ENCODE measurements at regions of chr6 and their contacts with region 1.

Region 1: GRCh38 chr6:32894080-32895005 is 40.4 kb downstream of the PSMB9 start:
- DNase-seq: peak; percentile 91 to 97 (median 91)
- H3K4me3 ChIP-seq: peak overlapping the region; percentile 78 to 90
- H3K4me3 Mint-ChIP-seq: peak overlapping the region; percentile 99 to 100 (median 100)
- H3K27ac ChIP-seq: peak overlapping the region; percentile 84
- H3K27ac Mint-ChIP-seq: peak overlapping the region; percentile 93 to 99 (median 98)
- H3K4me1 ChIP-seq: peaks cover 21% of the 10 kb centered on the region
- H3K4me1 Mint-ChIP-seq: peaks cover 14 to 45% (median 26%) of the 10 kb centered on the region in 4 donors
- H3K27me3 ChIP-seq: no peaks in the 10 kb centered on the region
- H3K27me3 Mint-ChIP-seq: no peaks in the 10 kb centered on the region

Region 2: DNA sequence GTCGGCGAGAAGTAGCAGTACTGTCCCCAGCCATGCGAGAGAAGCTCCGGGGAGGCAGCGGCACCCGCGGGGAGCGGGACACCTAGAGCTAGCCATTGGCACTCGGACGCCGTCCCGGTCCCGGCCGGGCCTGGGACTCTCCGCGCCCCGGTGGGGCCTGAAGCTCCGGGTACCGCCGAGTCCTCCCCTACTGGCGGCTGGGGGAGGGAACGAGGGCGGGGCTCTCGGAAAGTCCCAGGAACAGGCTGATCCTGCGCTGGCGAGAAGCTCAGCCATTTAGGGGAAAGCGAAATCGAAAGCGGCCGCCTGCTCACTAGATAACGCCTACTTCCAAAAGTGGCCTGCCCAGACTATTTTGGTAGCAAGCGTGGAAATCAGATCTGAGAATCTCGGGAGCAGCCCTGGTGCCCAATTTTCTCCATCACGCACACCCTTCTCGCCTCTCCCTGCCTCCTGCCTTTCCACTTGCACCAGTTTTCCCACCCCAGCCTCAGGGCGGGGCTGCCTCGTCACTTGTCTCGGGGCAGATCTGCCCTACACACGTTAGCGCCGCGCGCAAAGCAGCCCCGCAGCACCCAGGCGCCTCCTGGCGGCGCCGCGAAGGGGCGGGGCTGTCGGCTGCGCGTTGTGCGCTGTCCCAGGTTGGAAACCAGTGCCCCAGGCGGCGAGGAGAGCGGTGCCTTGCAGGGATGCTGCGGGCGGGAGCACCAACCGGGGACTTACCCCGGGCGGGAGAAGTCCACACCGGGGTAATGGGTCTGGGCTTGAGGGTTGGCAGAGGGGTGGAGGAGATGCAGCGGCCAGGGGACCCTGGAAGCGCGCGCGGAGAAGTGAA is 40.6 kb before region 1 on chr6 and contains the starts of genes PSMB9 and TAP1:
- CTCF ChIA-PET with region 1: interaction called, 4 read pairs
- POLR2A ChIA-PET with region 1: interaction called, 15 read pairs
- intact Hi-C with region 1: no loop called
- DNase-seq: peak; percentile 94 to 98 (median 96)
- H3K4me3 ChIP-seq: peak within 1 kb of the TSS; percentile 93 to 98
- H3K4me3 Mint-ChIP-seq: peak within 1 kb of the TSS; percentile 98 to 100 (median 99)
- H3K27ac ChIP-seq: peak within 1 kb of the TSS; percentile 100
- H3K27ac Mint-ChIP-seq: peak within 1 kb of the TSS; percentile 99 to 100 (median 100)
- H3K4me1 ChIP-seq: peaks cover 76% of the 10 kb centered on the region
- H3K4me1 Mint-ChIP-seq: peaks cover 57 to 92% (median 66%) of the 10 kb centered on the region in 4 donors
- H3K27me3 ChIP-seq: no peaks in the 10 kb centered on the region
- H3K27me3 Mint-ChIP-seq: no peaks in the 10 kb centered on the region
- total RNA-seq, gene PSMB9: 141 to 144 TPM
- total RNA-seq, gene TAP1: 136 to 141 TPM

Region 3: DNA sequence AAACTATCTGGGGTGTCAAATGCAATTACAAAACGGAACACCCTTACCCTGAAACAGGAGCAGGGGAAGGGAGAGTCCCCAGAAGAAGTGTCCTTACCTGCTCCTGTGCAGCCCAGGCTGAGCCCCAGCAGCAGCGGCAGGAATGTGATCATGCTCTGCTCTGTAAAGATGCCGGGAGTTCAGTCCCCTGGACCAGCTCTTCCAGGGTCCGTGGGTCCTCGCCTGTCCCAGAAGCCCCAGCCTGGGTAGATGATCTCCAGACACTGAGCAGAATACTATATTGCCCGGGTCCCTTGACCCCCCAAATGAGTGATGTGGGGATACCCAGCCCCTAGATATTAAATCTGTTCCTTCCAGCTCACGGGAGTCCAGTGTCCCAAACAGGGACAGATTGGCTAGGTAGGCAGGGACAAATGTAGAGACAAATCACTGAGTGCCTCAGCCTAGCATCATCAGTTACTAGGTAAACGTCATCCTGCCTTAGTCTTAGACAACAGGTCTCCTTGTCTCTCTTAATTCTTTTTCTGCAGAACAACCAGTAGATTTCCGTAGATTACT is 46.4 kb after region 1 on chr6 and contains the start of gene HLA-DMB:
- CTCF ChIA-PET with region 1: interaction called, 5 read pairs
- POLR2A ChIA-PET with region 1: interaction called, 24 read pairs
- intact Hi-C with region 1: no loop called
- DNase-seq: peak; percentile 68 to 82 (median 70)
- H3K4me3 ChIP-seq: peak within 1 kb of the TSS; percentile 57 to 73
- H3K4me3 Mint-ChIP-seq: peak within 1 kb of the TSS; percentile 89 to 97 (median 92)
- H3K27ac ChIP-seq: peak within 1 kb of the TSS; percentile 68
- H3K27ac Mint-ChIP-seq: peak within 1 kb of the TSS; percentile 90 to 99 (median 94)
- H3K4me1 ChIP-seq: peaks cover 57% of the 10 kb centered on the region
- H3K4me1 Mint-ChIP-seq: peaks cover 46 to 60% (median 53%) of the 10 kb centered on the region in 4 donors
- H3K27me3 ChIP-seq: no peaks in the 10 kb centered on the region
- H3K27me3 Mint-ChIP-seq: no peaks in the 10 kb centered on the region
- total RNA-seq, gene HLA-DMB: 7.9 to 8.1 TPM

Region 4: GRCh38 chr6:32952817-32953739 is 58.7 kb after region 1 on chr6 and contains the start of gene HLA-DMA:
- CTCF ChIA-PET with region 1: interaction called, 13 read pairs
- POLR2A ChIA-PET with region 1: interaction called, 14 read pairs
- intact Hi-C with region 1: loop called (anchors 2 kb)
- DNase-seq: peak; percentile 76 to 90 (median 85)
- H3K4me3 ChIP-seq: peak within 1 kb of the TSS; percentile 7 to 19
- H3K4me3 Mint-ChIP-seq: peak within 1 kb of the TSS; percentile 18 to 80 (median 68)
- H3K27ac ChIP-seq: peak within 1 kb of the TSS; percentile 31
- H3K27ac Mint-ChIP-seq: peak within 1 kb of the TSS; percentile 49 to 89 (median 82)
- H3K4me1 ChIP-seq: peaks cover 27% of the 10 kb centered on the region
- H3K4me1 Mint-ChIP-seq: peaks cover 24 to 44% (median 34%) of the 10 kb centered on the region in 4 donors
- H3K27me3 ChIP-seq: no peaks in the 10 kb centered on the region
- H3K27me3 Mint-ChIP-seq: no peaks in the 10 kb centered on the region
- total RNA-seq, gene HLA-DMA: 8.5 to 10.2 TPM

Region 5: GRCh38 chr6:33061987-33062386 is 167.6 kb after region 1 on chr6:
- CTCF ChIA-PET with region 1: no interaction called
- POLR2A ChIA-PET with region 1: no interaction called
- intact Hi-C with region 1: no loop called
- DNase-seq: no peak
- H3K4me3 ChIP-seq: no peak overlapping the region
- H3K4me3 Mint-ChIP-seq: no peak overlapping the region
- H3K27ac ChIP-seq: no peak overlapping the region
- H3K27ac Mint-ChIP-seq: no peak overlapping the region
- H3K4me1 ChIP-seq: no peaks in the 10 kb centered on the region
- H3K4me1 Mint-ChIP-seq: peaks cover 0 to 5% (median 1%) of the 10 kb centered on the region in 4 donors
- H3K27me3 ChIP-seq: no peaks in the 10 kb centered on the region
- H3K27me3 Mint-ChIP-seq: peaks cover 2 to 5% of the 10 kb centered on the region in 2 donors

Region 6: DNA sequence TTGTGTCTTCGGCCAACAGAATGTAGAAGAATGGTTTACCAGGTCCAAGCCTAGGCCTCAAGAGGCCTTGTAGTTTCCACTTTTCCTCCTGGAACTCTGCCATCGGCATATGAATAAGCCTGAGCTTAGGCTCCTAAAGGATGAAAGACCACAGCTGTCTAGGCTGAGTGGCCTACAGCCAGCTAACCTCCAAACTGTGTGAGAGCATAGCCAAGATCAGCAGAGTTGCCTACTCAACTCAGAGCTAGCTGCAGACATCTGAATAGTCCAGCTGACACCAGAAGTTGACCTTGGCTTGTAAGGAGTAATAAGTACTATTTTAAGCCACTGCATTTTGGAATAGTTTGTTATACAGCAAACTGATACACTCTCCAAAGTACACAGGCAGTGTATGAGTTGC is 1407.1 kb after region 1 on chr6:
- CTCF ChIA-PET with region 1: no interaction called
- POLR2A ChIA-PET with region 1: no interaction called
- intact Hi-C with region 1: no loop called
- DNase-seq: no peak
- H3K4me3 ChIP-seq: no peak overlapping the region
- H3K4me3 Mint-ChIP-seq: no peak overlapping the region
- H3K27ac ChIP-seq: no peak overlapping the region
- H3K27ac Mint-ChIP-seq: peak overlapping the region in 2 of 7 donors; percentile 15 to 24
- H3K4me1 ChIP-seq: no peaks in the 10 kb centered on the region
- H3K4me1 Mint-ChIP-seq: peaks cover 3 to 8% (median 6%) of the 10 kb centered on the region in 4 donors
- H3K27me3 ChIP-seq: no peaks in the 10 kb centered on the region
- H3K27me3 Mint-ChIP-seq: no peaks in the 10 kb centered on the region

Measured in CD4-positive, alpha-beta memory T cell (primary cell).